ENCODE measurements at regions of chr14 and their contacts with region 1.

Region 1: GRCh38 chr14:81269100-81269978 is 48.6 kb upstream of the GTF2A1 start:
- DNase-seq: no peak
- ATAC-seq: peak; percentile 66
- H3K4me3 Mint-ChIP-seq: no peak overlapping the region
- H3K27ac Mint-ChIP-seq: no peak overlapping the region
- H3K4me1 Mint-ChIP-seq: peaks cover 13% of the 10 kb centered on the region
- H3K27me3 Mint-ChIP-seq: peaks cover 42% of the 10 kb centered on the region

Region 2: DNA sequence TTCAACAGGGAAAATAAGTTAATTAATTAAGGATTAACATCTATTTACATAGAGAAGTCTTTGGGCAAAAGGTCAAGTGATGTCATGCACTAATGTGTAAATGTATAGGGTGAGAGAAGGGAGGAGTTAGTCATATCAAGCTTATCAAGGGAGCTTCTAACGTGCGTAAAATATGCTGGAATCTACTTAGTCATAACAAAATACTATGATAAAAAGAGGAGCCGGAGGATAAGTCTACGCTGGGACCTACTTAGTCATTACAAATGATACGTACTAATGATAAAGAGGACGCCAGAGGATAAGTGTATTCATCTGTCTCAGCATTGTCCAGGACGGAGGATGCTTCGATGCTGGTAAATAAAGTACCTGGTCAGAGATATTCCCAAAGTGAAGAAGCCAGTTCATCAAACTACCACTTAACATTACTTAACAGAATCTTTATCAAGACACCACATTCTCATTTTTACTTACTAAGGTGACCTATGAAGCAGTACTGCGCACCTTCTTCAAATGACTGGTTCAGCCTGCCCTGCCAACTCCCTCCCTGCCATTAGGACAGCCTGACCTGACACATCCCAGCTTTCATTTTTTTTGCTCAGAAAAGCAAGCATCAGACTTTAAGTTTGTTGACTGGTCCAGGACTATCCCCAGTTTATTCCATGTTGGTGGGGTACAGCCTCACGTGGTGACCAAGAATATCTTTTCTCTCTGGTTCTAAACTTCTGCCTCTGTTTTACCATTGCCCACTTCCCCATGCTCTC is 17.9 kb after region 1 on chr14:
- CTCF ChIA-PET with region 1: no interaction called
- DNase-seq: no peak
- ATAC-seq: no peak
- H3K4me3 Mint-ChIP-seq: no peak overlapping the region
- H3K27ac Mint-ChIP-seq: no peak overlapping the region
- H3K4me1 Mint-ChIP-seq: no peaks in the 10 kb centered on the region
- H3K27me3 Mint-ChIP-seq: peaks cover 20% of the 10 kb centered on the region

Region 3: GRCh38 chr14:81453166-81453766 is 183.9 kb after region 1 on chr14:
- CTCF ChIA-PET with region 1: interaction called, 105 read pairs
- DNase-seq: peak; percentile 69
- ATAC-seq: peak; percentile 63
- H3K4me3 Mint-ChIP-seq: no peak overlapping the region
- H3K27ac Mint-ChIP-seq: no peak overlapping the region
- H3K4me1 Mint-ChIP-seq: peaks cover 6% of the 10 kb centered on the region
- H3K27me3 Mint-ChIP-seq: peaks cover 22% of the 10 kb centered on the region

Measured in activated CD8-positive, alpha-beta memory T cell treated with anti-CD3 and anti-CD28 coated beads, Interleukin-2, amount 10 ng/mL, durations not matched to agents 7 days and 5 days (primary cell).